Calu3 (cell line): ENCODE measurements at regions of chr6 and their contacts with region 1.

Region 1: DNA sequence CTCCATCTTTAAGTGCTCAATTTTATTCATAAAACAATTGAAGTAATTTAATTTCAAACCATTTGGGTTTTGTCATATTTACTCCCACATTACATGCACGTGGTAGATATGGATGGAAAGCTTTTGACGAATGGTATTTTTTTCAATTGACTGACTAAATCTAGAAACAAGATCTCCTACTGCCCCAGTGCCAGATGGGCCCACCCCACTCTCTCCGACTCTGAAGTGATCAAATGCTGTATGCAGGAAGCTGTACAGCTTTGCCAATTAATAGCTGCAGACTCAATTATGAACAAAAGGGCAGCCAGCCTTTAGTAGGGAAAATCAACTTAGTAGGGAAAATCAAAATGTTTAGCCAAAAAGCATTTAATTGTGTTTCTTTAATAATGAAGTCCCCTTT is 46.2 kb downstream of the PACRG start:
- DNase-seq: no peak
- H3K4me3 Mint-ChIP-seq: no peak overlapping the region
- H3K27ac Mint-ChIP-seq: no peak overlapping the region
- H3K4me1 Mint-ChIP-seq: no peaks in the 10 kb centered on the region
- H3K27me3 Mint-ChIP-seq: no peaks in the 10 kb centered on the region
- CTCF ChIP-seq: no peak

Region 2: DNA sequence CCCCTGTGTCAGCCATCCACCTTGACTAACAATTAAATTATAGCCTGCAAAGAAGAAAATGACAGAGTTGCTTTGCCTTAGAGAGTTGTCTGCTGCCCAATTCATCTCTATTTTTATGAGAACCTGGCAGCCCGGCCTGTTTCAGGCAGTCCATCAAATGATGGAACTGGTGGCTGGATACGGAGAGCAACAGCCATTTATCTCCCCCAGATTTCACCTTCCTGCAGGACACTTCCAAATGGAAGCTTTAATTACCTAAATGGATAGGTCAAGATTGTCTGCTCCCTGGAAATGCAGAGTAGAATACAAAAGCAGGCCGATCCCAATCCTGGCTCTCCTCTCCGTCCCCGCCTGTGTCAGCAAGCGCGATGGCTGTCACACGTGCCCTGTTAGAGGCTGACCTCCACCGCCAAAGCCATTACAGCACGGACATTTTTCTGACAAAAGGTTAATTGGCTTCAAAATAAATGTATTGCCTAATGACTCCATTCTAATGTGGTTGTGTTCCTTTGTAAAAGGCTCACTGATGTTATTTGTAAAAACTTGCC is 40.5 kb after region 1 on chr6:
- CTCF ChIA-PET with region 1: no interaction called
- intact Hi-C with region 1: loop called (anchors 2 kb)
- DNase-seq: no peak
- H3K4me3 Mint-ChIP-seq: no peak overlapping the region
- H3K27ac Mint-ChIP-seq: no peak overlapping the region
- H3K4me1 Mint-ChIP-seq: no peaks in the 10 kb centered on the region
- H3K27me3 Mint-ChIP-seq: no peaks in the 10 kb centered on the region
- CTCF ChIP-seq: no peak

Region 3: GRCh38 chr6:162973151-162973872 is 199.3 kb after region 1 on chr6:
- CTCF ChIA-PET with region 1: no interaction called
- intact Hi-C with region 1: no loop called
- DNase-seq: no peak
- H3K4me3 Mint-ChIP-seq: no peak overlapping the region
- H3K27ac Mint-ChIP-seq: no peak overlapping the region
- H3K4me1 Mint-ChIP-seq: peaks cover 8% of the 10 kb centered on the region
- H3K27me3 Mint-ChIP-seq: no peaks in the 10 kb centered on the region
- CTCF ChIP-seq: no peak